H1 (cell line): ENCODE measurements at regions of chr16 and their contacts with region 1.

Region 1: DNA sequence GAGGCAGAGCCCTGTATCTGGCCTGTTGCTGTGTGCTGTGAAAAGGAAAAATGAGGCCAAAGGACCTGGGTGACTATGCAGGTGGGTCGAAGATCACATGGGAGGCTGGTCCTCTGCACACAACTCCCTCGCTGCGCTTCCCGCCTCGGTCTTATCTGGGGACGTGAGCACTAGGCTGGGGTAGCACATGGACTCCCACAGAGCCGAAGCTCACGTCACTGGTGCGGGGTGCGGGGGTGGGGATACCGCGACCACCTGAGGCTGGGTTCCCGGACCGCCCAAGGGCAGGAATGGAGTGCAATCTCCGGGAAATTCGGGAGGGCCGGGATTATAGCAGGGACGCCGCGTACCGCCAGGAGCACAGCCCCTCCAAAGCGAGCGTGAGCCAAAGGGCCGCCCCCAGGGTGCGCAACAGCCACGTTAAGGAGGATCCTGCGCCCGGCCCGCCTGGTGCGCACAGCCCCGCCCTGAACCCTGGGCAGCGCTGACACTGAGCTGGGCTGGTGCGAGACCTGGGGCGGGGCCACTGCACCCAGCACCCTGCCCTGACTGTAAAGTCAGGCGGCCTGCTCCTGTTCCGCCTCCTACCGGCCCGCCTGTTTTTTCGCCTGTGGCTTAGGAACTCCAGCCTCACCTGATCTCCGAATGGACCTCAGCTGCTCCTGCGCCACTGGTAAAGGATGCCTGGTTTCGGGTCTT is 4.8 kb downstream of the MT1A start:
- DNase-seq: peak in 1 of 2 experiments; percentile 67
- H3K4me3 ChIP-seq: peak overlapping the region; percentile 18 to 51 (median 34); a peak in 7 of 8 replicates
- H3K27ac ChIP-seq: no peak overlapping the region
- H3K4me1 ChIP-seq: peaks cover 3 to 20% (median 7%) of the 10 kb centered on the region in 4 experiments
- H3K27me3 ChIP-seq: peaks cover 84 to 100% (median 99%) of the 10 kb centered on the region in 4 experiments
- CTCF ChIP-seq: peak; percentile 39 to 50 (median 42)
- EP300 ChIP-seq: no peak
- POLR2A ChIP-seq: no peak
- RAD21 ChIP-seq: peak; percentile 32 to 36

Region 2: DNA sequence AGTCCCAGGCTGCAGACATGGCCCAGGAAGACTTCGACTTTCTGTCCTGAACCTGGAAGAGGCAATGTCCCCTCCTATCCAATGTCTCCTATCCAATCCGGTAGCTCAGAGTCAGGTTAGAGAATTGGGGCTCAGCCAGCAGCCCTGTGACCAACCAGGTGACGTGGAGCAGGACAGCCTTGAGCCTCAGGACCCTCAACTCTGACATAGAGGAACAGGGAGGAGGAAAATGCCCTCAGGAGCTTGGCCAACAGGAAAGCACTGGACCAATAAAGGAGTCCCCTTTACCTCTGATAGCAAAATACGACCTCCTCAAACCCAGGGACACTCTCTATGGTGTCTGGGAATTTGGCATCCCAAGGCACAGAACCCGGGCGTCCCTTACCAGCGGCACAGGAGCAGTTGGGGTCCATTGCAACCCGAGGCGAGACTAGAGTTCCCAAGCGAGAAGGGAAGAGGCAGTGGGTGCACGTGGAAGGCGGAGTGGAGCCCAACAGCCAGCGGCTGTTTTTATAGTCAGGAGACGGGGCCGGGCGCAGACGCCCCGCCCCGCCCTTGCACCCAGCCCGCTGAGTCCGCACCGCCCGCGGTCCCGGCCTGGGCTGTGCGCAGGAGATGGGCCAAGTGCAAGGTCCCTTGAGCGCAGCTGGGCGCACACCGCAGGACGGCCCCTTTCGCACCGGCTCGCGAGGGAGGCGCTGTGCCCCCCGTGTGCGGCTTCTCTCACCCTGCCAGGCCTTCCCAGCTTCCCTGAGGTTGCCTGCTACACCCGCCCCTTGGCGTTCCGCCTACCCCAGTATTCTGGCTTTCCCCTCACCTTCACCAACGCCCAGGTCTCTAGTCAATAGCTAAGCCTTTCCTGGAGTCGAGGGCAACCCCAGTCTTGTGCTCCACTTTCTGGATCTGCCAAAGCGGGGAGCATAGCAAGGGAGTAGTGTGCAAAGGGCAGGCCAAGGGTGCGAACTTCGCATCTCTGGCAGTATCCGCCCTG is 24.6 kb after region 1 on chr16 and contains the start of gene MT1G:
- CTCF ChIA-PET with region 1: interaction called, 8 read pairs
- POLR2A ChIA-PET with region 1: interaction called, 17 read pairs
- DNase-seq: peak in 1 of 2 experiments; percentile 70
- H3K4me3 ChIP-seq: peak within 1 kb of the TSS; percentile 13 to 53 (median 16); a peak in 5 of 8 replicates
- H3K27ac ChIP-seq: no peak within 1 kb of the TSS
- H3K4me1 ChIP-seq: peaks cover 3 to 16% (median 12%) of the 10 kb centered on the region in 4 experiments
- H3K27me3 ChIP-seq: peaks cover 81 to 98% (median 93%) of the 10 kb centered on the region in 4 experiments
- CTCF ChIP-seq: no peak
- EP300 ChIP-seq: no peak
- POLR2A ChIP-seq: no peak
- RAD21 ChIP-seq: no peak
- total RNA-seq, gene MT1G: 17.7 and 19.7 TPM in 2 replicates